ENCODE measurements at regions of chr3 and their contacts with region 1.

Region 1: GRCh38 chr3:152811974-152812760 is 22.8 kb upstream of the P2RY1 start:
- DNase-seq: peak; percentile 49
- H3K4me3 ChIP-seq: no peak overlapping the region
- H3K4me3 Mint-ChIP-seq: peak overlapping the region; percentile 5
- H3K27ac Mint-ChIP-seq: no peak overlapping the region
- H3K4me1 ChIP-seq: peaks cover 24% of the 10 kb centered on the region
- H3K4me1 Mint-ChIP-seq: peaks cover 13% of the 10 kb centered on the region
- H3K27me3 ChIP-seq: no peaks in the 10 kb centered on the region
- H3K27me3 Mint-ChIP-seq: no peaks in the 10 kb centered on the region
- CTCF ChIP-seq: no peak

Region 2: DNA sequence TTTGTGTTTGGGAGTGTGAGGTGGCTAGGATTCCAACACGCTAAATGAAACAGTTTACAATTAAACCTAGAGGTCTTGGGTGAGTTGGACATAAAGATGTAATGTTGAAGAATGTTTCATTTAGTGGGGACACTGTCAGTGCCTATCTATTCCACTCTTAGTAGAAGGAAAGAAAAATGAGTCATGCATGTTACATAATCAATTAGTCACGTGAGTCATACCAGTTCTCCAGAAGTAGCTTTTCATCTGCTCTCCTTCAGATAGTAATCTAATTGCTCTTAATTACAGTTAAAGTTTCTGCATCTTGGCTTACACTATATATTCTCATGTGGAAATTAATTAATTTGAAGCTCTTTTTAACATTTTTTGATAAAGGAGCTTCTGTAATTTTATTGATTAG is 92.9 kb before region 1 on chr3:
- CTCF ChIA-PET with region 1: no interaction called
- POLR2A ChIA-PET with region 1: no interaction called
- intact Hi-C with region 1: loop called (anchors 10 kb)
- DNase-seq: no peak
- H3K4me3 ChIP-seq: no peak overlapping the region
- H3K4me3 Mint-ChIP-seq: no peak overlapping the region
- H3K27ac Mint-ChIP-seq: no peak overlapping the region
- H3K4me1 ChIP-seq: peaks cover 18% of the 10 kb centered on the region; the same call in 1 of the 2 replicates
- H3K4me1 Mint-ChIP-seq: peaks cover 12% of the 10 kb centered on the region
- H3K27me3 ChIP-seq: no peaks in the 10 kb centered on the region
- H3K27me3 Mint-ChIP-seq: no peaks in the 10 kb centered on the region
- CTCF ChIP-seq: no peak

Region 3: DNA sequence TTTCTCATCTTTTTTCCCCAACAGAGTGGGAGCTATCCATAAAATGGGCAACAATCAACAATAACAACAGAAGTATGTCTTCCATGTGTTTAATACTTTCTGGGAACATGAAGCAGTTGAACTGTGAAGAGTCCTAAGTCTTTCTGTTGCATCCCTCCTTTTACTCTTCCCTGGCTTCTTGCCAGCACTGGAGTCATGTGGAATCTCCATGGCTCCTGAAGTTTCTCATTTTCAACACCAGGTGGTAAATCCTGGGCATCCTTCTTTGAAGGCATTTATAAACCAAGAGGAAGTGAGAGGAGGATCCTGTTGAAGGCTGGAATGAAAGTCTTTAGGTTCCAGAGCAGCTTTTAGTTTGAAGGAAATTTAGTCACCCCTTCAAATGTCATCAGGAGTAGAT is 17.4 kb before region 1 on chr3:
- CTCF ChIA-PET with region 1: no interaction called
- POLR2A ChIA-PET with region 1: no interaction called
- intact Hi-C with region 1: loop called (anchors 2 kb)
- DNase-seq: no peak
- H3K4me3 ChIP-seq: no peak overlapping the region
- H3K4me3 Mint-ChIP-seq: no peak overlapping the region
- H3K27ac Mint-ChIP-seq: no peak overlapping the region
- H3K4me1 ChIP-seq: peaks cover 18% of the 10 kb centered on the region
- H3K4me1 Mint-ChIP-seq: peaks cover 20% of the 10 kb centered on the region
- H3K27me3 ChIP-seq: no peaks in the 10 kb centered on the region
- H3K27me3 Mint-ChIP-seq: no peaks in the 10 kb centered on the region
- CTCF ChIP-seq: no peak

Region 4: GRCh38 chr3:152880675-152881074 is 68.5 kb after region 1 on chr3:
- CTCF ChIA-PET with region 1: no interaction called
- POLR2A ChIA-PET with region 1: no interaction called
- intact Hi-C with region 1: loop called (anchors 1 kb)
- DNase-seq: peak in 1 of 2 experiments; percentile 11
- H3K4me3 ChIP-seq: no peak overlapping the region
- H3K4me3 Mint-ChIP-seq: no peak overlapping the region
- H3K27ac Mint-ChIP-seq: no peak overlapping the region
- H3K4me1 ChIP-seq: peaks cover 11% of the 10 kb centered on the region; the same call in 1 of the 2 replicates
- H3K4me1 Mint-ChIP-seq: peaks cover 13% of the 10 kb centered on the region
- H3K27me3 ChIP-seq: peaks cover 1% of the 10 kb centered on the region; the same call in 1 of the 2 replicates
- H3K27me3 Mint-ChIP-seq: peaks cover 6% of the 10 kb centered on the region
- CTCF ChIP-seq: no peak

Region 5: GRCh38 chr3:153127788-153128187 is 315.6 kb after region 1 on chr3:
- CTCF ChIA-PET with region 1: no interaction called
- POLR2A ChIA-PET with region 1: no interaction called
- intact Hi-C with region 1: no loop called
- DNase-seq: no peak
- H3K4me3 ChIP-seq: no peak overlapping the region
- H3K4me3 Mint-ChIP-seq: no peak overlapping the region
- H3K27ac Mint-ChIP-seq: no peak overlapping the region
- H3K4me1 ChIP-seq: no peaks in the 10 kb centered on the region
- H3K4me1 Mint-ChIP-seq: no peaks in the 10 kb centered on the region
- H3K27me3 ChIP-seq: no peaks in the 10 kb centered on the region
- H3K27me3 Mint-ChIP-seq: no peaks in the 10 kb centered on the region
- CTCF ChIP-seq: no peak